Mammary epithelial cell (primary cell): ENCODE measurements at regions of chr15 and their contacts with region 1.

Region 1: DNA sequence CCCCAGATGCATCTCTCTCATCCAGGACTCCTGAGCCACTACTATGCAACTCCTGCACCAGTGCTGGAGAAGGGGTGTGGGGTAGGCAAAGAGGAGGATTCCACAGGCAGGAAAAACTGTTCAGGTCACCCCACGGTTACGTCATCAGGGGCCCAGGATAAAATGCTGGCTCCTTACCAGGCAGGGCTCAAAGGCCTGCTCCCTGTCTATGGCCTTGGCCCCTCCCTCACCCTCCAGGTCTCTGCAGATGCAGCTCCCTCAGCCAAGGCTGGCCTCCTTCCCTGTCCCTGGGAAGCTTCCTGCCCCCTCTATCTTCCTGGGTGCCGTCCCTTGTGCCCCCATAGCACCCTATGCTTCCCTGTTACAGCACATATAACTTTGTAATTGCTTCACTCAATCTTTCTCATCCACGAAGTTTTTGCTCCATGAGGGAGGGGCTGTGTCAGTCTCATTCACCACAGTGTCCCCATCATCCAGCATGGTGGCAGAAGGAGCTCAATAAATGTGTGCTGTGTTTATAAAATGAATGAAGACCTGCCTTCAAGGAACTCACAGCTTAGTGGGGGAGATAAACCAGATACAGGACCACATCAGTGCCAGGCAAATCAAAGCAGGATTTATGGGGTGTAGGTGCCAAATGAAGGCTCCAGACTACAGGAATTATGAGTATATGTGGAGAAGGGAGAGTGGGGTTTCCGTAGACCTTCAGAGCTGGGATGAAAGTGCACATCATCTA is 18.6 kb downstream of the KBTBD13 start:
- DNase-seq: no peak
- H3K4me3 ChIP-seq: no peak overlapping the region
- H3K27ac ChIP-seq: no peak overlapping the region
- H3K4me1 ChIP-seq: peaks cover 13% of the 10 kb centered on the region
- H3K27me3 ChIP-seq: no peaks in the 10 kb centered on the region
- CTCF ChIP-seq: no peak

Region 2: GRCh38 chr15:64566629-64567427 is 528.4 kb before region 1 on chr15:
- CTCF ChIA-PET with region 1: no interaction called
- dilution Hi-C with region 1: no loop called
- in situ Hi-C with region 1: no loop called
- intact Hi-C with region 1: no loop called
- DNase-seq: no peak
- H3K4me3 ChIP-seq: no peak overlapping the region
- H3K27ac ChIP-seq: no peak overlapping the region
- H3K4me1 ChIP-seq: peaks cover 1% of the 10 kb centered on the region
- H3K27me3 ChIP-seq: no peaks in the 10 kb centered on the region
- CTCF ChIP-seq: no peak

Region 3: GRCh38 chr15:65110676-65111292 is 15.6 kb after region 1 on chr15:
- CTCF ChIA-PET with region 1: no interaction called
- dilution Hi-C with region 1: no loop called
- in situ Hi-C with region 1: no loop called
- intact Hi-C with region 1: no loop called
- DNase-seq: peak; percentile 6
- H3K4me3 ChIP-seq: no peak overlapping the region
- H3K27ac ChIP-seq: no peak overlapping the region
- H3K4me1 ChIP-seq: no peaks in the 10 kb centered on the region
- H3K27me3 ChIP-seq: no peaks in the 10 kb centered on the region
- CTCF ChIP-seq: no peak

Region 4: DNA sequence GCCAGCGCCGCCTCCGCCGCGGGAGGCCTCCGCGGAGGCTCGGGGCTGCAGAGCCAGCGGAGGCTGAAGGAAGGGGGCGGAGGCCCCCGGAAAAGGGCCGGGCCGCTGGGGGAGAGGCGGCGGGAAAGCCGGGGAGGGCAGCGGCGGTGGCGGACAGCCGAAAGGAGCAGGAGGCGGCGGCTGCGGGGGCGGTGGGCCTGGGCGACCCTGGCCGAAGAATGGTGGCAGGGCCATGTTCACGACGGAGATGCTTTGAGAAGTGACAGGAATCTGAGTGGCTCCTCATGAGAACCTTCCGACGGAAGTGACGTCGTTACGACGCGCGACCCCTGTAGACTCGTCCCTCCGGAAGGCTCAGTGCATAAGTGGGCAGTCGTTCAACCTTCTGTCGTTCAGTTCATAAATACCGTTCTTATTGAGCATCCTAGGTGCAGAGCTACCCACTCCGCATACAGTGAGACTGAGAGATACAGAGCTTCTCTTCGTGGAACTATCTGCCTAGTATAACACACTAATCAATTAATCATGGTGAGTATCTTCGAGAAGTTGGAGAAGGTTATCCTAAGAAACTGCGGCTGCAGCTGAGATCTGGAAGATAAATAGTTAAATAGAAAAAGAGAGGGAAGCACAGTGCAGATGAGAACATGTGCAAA is 38.5 kb after region 1 on chr15 and contains the start of gene PDCD7:
- CTCF ChIA-PET with region 1: no interaction called
- dilution Hi-C with region 1: loop called (anchors 5 kb)
- in situ Hi-C with region 1: no loop called
- intact Hi-C with region 1: no loop called
- DNase-seq: peak; percentile 85
- H3K4me3 ChIP-seq: peak within 1 kb of the TSS; percentile 50 to 78 (median 73)
- H3K27ac ChIP-seq: peak within 1 kb of the TSS; percentile 73
- H3K4me1 ChIP-seq: peaks cover 8% of the 10 kb centered on the region
- H3K27me3 ChIP-seq: no peaks in the 10 kb centered on the region
- CTCF ChIP-seq: no peak
- total RNA-seq, gene PDCD7: 16.7 to 22.5 TPM

Region 5: DNA sequence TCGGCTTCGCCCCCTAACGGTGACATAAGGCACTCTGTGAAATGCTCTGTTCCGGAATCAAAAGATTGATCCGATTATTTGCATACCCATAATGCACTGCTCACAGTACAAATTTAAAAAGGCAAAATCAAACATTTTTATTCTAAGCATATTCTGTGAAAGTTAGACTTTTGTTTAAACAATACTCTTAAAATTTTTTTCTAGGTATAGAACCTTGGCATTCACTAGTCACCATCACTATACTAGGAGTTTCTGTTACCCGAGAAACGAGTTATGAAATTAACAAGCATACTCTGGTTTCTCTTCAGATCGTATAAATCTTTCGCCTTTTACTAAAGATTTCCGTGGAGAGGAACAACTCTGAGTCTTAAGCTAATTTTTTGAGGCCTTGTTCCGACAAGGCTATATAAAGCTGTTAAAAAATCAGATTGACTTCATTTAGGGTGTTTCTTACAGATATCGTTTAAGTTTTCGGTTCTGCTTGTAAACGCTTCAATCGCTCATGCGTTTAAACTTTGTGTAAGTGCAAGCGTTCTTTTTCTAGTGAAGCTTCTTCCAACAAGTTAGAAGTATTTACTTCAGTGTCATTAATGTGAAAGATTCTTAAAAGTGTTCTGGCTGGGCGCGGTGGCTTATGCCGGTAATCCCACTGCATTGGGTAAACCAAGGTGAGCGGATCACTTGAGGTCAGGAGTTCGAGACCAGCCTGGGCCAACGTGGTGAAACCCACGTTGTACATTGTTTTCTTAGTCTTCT is 209.4 kb after region 1 on chr15 and contains the start of gene RNU5B-1:
- CTCF ChIA-PET with region 1: no interaction called
- dilution Hi-C with region 1: no loop called
- in situ Hi-C with region 1: no loop called
- intact Hi-C with region 1: no loop called
- DNase-seq: peak; percentile 70
- H3K4me3 ChIP-seq: peak within 1 kb of the TSS; percentile 40 to 90 (median 45)
- H3K27ac ChIP-seq: peak within 1 kb of the TSS; percentile 100
- H3K4me1 ChIP-seq: peaks cover 14% of the 10 kb centered on the region
- H3K27me3 ChIP-seq: no peaks in the 10 kb centered on the region
- CTCF ChIP-seq: peak; percentile 87 to 94
- total RNA-seq, gene RNU5B-1: not detected